Common myeloid progenitor, CD34-positive (primary cell): ENCODE measurements at regions of chr1 and their contacts with region 1.

Region 1: GRCh38 chr1:203504397-203505250 is 10.7 kb downstream of the OPTC start:
- DNase-seq: peak; percentile 65 to 82 (median 72)
- H3K4me3 ChIP-seq: no peak overlapping the region
- H3K27ac ChIP-seq: no peak overlapping the region
- H3K4me1 ChIP-seq: no peaks in the 10 kb centered on the region
- H3K27me3 ChIP-seq: peaks cover 0 to 9% (median 3%) of the 10 kb centered on the region in 5 experiments

Region 2: GRCh38 chr1:203267347-203267846 is 237.2 kb before region 1 on chr1:
- CTCF ChIA-PET with region 1: interaction called, 13 read pairs
- POLR2A ChIA-PET with region 1: no interaction called
- DNase-seq: peak; percentile 85 to 92 (median 89)
- H3K4me3 ChIP-seq: peak overlapping the region; percentile 41 to 82 (median 72)
- H3K27ac ChIP-seq: peak overlapping the region in 1 of 2 experiments; percentile 43
- H3K4me1 ChIP-seq: peaks cover 0 to 28% (median 20%) of the 10 kb centered on the region in 4 experiments
- H3K27me3 ChIP-seq: no peaks in the 10 kb centered on the region

Region 3: DNA sequence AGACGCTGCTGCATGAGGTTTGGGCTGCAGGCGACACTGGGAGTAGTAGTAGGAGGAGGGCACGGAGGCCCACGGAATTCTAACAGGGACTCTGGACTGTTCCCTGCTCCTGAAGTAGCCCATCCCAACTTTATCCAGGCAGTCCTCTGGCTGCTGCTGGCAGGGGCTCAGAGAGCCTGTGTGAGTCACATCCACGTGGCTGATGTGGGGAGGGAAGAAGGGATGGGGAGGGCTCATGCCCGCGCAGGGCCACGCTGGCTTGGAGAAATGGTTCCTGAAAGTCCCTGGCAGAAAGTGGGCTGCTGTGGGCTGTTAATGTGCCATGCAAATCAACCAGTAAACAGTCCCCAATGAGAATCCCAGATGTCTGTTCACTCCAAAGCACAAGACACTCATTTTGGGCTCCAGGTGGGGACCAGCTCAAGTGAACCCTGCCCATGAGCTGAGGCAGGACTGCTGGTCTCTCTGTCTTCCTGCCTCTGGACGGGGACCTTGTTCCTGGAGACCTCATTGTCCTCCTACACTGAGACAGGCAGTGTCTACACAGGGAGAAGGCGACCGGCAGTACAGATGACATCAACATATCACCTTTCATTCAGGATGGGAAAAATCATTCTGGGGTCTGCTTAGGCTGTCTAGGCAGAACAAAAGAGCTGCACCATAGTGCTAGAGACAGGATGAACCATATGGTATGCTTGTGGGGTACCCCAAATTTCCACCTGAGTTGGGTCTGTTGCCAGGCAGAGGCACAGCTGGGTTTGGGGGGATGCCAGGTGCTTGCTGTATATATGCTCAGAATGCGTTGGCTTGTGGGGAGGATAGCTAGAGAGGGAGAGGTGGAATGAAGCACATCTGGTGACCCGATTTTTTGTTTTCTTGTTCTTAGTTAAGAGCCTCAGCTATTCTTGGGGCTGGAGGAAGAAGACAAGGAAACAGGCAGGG is 95.9 kb before region 1 on chr1:
- CTCF ChIA-PET with region 1: no interaction called
- POLR2A ChIA-PET with region 1: no interaction called
- DNase-seq: no peak
- H3K4me3 ChIP-seq: no peak overlapping the region
- H3K27ac ChIP-seq: no peak overlapping the region
- H3K4me1 ChIP-seq: peaks cover 0 to 8% (median 2%) of the 10 kb centered on the region in 4 experiments
- H3K27me3 ChIP-seq: no peaks in the 10 kb centered on the region

Region 4: GRCh38 chr1:203486618-203487370 is 17.8 kb before region 1 on chr1:
- CTCF ChIA-PET with region 1: interaction called, 15 read pairs
- POLR2A ChIA-PET with region 1: no interaction called
- DNase-seq: no peak
- H3K4me3 ChIP-seq: peak overlapping the region in 1 of 7 experiments; percentile 61
- H3K27ac ChIP-seq: no peak overlapping the region
- H3K4me1 ChIP-seq: peaks cover 0 to 9% (median 4%) of the 10 kb centered on the region in 4 experiments
- H3K27me3 ChIP-seq: no peaks in the 10 kb centered on the region

Region 5: DNA sequence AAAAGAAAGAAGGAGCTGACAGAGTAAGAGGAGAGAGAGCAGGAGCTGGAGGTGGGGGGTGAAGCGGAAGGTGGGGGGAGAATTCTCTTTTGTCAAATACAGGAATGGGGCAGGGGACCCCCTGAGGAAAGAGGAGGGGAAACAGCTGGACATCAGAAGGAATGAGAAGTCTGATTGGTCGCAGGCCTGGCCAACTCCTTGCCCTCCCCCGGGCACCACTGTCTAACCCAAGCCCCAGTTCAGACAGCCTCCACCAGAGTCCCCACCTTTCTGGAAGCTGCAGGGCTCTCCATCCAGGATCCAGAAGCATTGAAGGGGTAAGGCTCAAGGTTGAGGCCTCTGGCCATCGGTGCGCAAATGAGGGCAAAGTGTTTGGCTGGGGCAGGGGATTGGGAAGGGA is 10.7 kb before region 1 on chr1 and contains the start of gene OPTC:
- CTCF ChIA-PET with region 1: interaction called, 21 read pairs
- POLR2A ChIA-PET with region 1: no interaction called
- DNase-seq: no peak
- H3K4me3 ChIP-seq: no peak within 1 kb of the TSS
- H3K27ac ChIP-seq: no peak within 1 kb of the TSS
- H3K4me1 ChIP-seq: no peaks in the 10 kb centered on the region
- H3K27me3 ChIP-seq: no peaks in the 10 kb centered on the region

Region 6: GRCh38 chr1:203593723-203594122 is 89.1 kb after region 1 on chr1:
- CTCF ChIA-PET with region 1: interaction called, 16 read pairs
- POLR2A ChIA-PET with region 1: no interaction called
- DNase-seq: peak; percentile 53 to 78 (median 72)
- H3K4me3 ChIP-seq: no peak overlapping the region
- H3K27ac ChIP-seq: no peak overlapping the region
- H3K4me1 ChIP-seq: peaks cover 0 to 5% (median 0%) of the 10 kb centered on the region in 4 experiments
- H3K27me3 ChIP-seq: peaks cover 0 to 2% (median 0%) of the 10 kb centered on the region in 5 experiments

Region 7: DNA sequence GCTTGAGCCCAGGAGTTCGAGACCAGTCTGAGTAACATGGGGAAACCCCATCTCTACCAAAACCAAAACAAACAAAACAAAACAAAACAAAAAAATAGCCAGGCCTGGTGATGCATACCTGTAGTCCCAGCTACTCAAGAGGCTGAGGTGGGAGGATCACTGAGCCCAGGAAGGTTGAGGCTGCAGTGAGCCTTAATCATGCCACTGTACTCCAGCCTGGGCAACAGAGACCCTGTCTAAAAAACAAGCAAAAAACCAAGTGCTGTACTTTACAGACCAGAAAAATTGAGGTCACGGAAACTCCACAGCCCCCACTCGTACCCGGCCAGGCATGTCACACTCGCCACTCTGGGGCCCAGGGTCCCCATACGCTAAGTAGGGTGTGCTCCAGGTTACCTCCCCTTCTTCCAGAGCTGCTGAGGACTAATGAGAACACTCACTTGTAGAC is 145.0 kb after region 1 on chr1:
- CTCF ChIA-PET with region 1: no interaction called
- POLR2A ChIA-PET with region 1: no interaction called
- DNase-seq: peak in 2 of 3 donors; percentile 37 to 40
- H3K4me3 ChIP-seq: no peak overlapping the region
- H3K27ac ChIP-seq: no peak overlapping the region
- H3K4me1 ChIP-seq: peaks cover 6 to 49% (median 39%) of the 10 kb centered on the region in 4 experiments
- H3K27me3 ChIP-seq: no peaks in the 10 kb centered on the region